HEK293T (cell line): ENCODE measurements at regions of chr4 and their contacts with region 1.

Region 1: GRCh38 chr4:67700738-67701516 is at the start of gene UBA6:
- DNase-seq: peak; percentile 95

Region 2: DNA sequence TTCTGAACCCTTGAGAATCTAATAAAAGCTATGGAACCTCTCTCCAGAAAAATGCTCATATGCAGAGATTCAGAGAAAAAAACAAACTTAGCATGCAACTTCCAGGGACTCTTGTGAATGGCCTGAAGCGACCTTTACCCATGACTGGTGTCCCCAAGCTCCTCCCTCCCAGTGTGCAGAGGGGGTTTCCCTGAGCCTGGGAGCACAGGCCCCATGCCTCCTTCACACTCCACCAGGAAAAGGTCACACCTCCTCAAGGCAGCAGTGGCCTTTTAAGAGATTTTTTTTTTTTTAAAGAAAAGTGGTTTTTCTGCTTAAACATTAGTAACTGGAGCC is 13.3 kb after region 1 on chr4:
- CTCF ChIA-PET with region 1: no interaction called
- POLR2A ChIA-PET with region 1: interaction called, 12 read pairs
- DNase-seq: no peak